A549 (cell line): ENCODE measurements at regions of chr11 and their contacts with region 1.

Region 1: GRCh38 chr11:75204685-75205563 is 35.6 kb upstream of the TPBGL start:
- DNase-seq: peak; percentile 75 to 84
- ATAC-seq: peak; percentile 85 to 99
- H3K4me3 ChIP-seq: no peak overlapping the region
- H3K27ac ChIP-seq: no peak overlapping the region
- H3K4me1 ChIP-seq: no peaks in the 10 kb centered on the region
- CTCF ChIP-seq: peak; percentile 85
- EP300 ChIP-seq: no peak
- POLR2A ChIP-seq: no peak
- RAD21 ChIP-seq: peak; percentile 90 to 91

Region 2: GRCh38 chr11:75014129-75014528 is 190.8 kb before region 1 on chr11:
- CTCF ChIA-PET with region 1: interaction called, 177 read pairs
- POLR2A ChIA-PET with region 1: no interaction called
- DNase-seq: peak in 1 of 2 experiments; percentile 18
- ATAC-seq: peak; percentile 41 to 63; a peak in 2 of 6 replicates
- H3K4me3 ChIP-seq: no peak overlapping the region
- H3K27ac ChIP-seq: no peak overlapping the region
- H3K4me1 ChIP-seq: peaks cover 3% of the 10 kb centered on the region; the same call in 1 of the 3 replicates
- CTCF ChIP-seq: no peak
- EP300 ChIP-seq: no peak
- POLR2A ChIP-seq: no peak
- RAD21 ChIP-seq: no peak

Region 3: GRCh38 chr11:75031771-75032549 is 173.0 kb before region 1 on chr11:
- CTCF ChIA-PET with region 1: interaction called, 177 read pairs
- POLR2A ChIA-PET with region 1: no interaction called
- DNase-seq: peak; percentile 71
- ATAC-seq: peak; percentile 85 to 95
- H3K4me3 ChIP-seq: no peak overlapping the region
- H3K27ac ChIP-seq: peak overlapping the region in 1 of 2 experiments; percentile 63; a peak in 3 of 6 replicates
- H3K4me1 ChIP-seq: peaks cover 9% of the 10 kb centered on the region; the same call in 1 of the 3 replicates
- CTCF ChIP-seq: peak; percentile 67
- EP300 ChIP-seq: no peak
- POLR2A ChIP-seq: no peak
- RAD21 ChIP-seq: peak; percentile 53 to 66

Region 4: GRCh38 chr11:75063732-75064314 is 141.1 kb before region 1 on chr11:
- CTCF ChIA-PET with region 1: no interaction called
- POLR2A ChIA-PET with region 1: no interaction called
- DNase-seq: no peak
- ATAC-seq: no peak
- H3K4me3 ChIP-seq: no peak overlapping the region
- H3K27ac ChIP-seq: no peak overlapping the region
- H3K4me1 ChIP-seq: no peaks in the 10 kb centered on the region
- CTCF ChIP-seq: no peak
- EP300 ChIP-seq: no peak
- POLR2A ChIP-seq: no peak
- RAD21 ChIP-seq: no peak

Region 5: DNA sequence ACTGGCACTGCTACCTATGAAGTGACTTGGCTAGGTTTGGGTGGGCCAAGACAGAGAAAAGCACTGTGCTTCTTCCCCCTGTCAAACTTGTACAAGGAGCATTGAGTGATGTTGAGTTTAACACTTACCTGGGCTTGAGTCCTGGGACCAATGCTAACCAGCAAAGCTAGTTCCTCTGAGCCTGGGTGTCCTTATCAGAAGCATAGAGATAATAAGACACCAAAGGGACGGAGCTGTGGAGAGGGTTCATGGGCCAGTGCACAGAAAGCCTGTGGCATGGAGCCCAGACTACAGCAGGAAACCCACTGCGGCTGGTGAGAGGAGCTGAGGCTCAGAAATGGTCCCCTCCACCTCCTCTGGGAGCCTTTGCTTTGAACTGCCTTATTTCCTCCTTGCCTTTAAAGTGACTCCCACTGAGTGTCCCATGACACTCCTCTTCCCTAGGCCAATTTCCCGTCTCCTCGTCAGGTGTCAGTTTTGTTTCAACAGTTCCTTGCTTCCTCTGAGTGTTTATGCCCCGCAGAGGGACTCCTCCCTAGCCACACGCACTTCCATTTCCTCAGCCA is 44.6 kb before region 1 on chr11:
- CTCF ChIA-PET with region 1: interaction called, 10 read pairs
- POLR2A ChIA-PET with region 1: no interaction called
- DNase-seq: no peak
- ATAC-seq: no peak
- H3K4me3 ChIP-seq: no peak overlapping the region
- H3K27ac ChIP-seq: peak overlapping the region; percentile 1 to 31; a peak in 1 of 6 replicates
- H3K4me1 ChIP-seq: peaks cover 24% of the 10 kb centered on the region
- CTCF ChIP-seq: no peak
- EP300 ChIP-seq: no peak
- POLR2A ChIP-seq: no peak
- RAD21 ChIP-seq: no peak

Region 6: GRCh38 chr11:75182669-75183068 is 22.3 kb before region 1 on chr11:
- CTCF ChIA-PET with region 1: interaction called, 12 read pairs
- POLR2A ChIA-PET with region 1: no interaction called
- DNase-seq: no peak
- ATAC-seq: no peak
- H3K4me3 ChIP-seq: no peak overlapping the region
- H3K27ac ChIP-seq: no peak overlapping the region
- H3K4me1 ChIP-seq: no peaks in the 10 kb centered on the region
- CTCF ChIP-seq: no peak
- EP300 ChIP-seq: no peak
- POLR2A ChIP-seq: no peak
- RAD21 ChIP-seq: no peak

Region 7: DNA sequence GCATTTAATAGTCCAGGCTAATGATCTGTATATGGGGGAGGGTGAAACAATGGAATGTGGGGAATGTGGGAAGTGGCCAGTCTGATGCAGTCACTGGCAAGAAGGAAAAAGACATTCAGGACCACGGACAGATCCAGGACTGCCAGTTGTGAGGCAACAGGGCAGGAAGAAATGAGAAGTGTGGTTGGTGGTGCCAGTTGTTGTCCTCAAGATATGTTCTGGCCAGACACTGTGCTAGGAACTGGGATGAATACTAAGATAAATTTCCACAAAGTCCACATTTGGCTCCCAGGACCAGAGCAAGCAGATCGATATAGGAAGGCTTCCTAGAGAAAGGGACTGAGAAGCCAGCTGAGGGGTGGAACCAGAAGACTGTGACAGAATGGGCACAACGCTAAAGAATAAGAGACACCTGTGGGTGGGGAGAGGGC is 28.8 kb after region 1 on chr11:
- CTCF ChIA-PET with region 1: interaction called, 11 read pairs
- POLR2A ChIA-PET with region 1: no interaction called
- DNase-seq: peak in 1 of 2 experiments; percentile 46
- ATAC-seq: peak; percentile 30 to 46; a peak in 1 of 6 replicates
- H3K4me3 ChIP-seq: no peak overlapping the region
- H3K27ac ChIP-seq: no peak overlapping the region
- H3K4me1 ChIP-seq: no peaks in the 10 kb centered on the region
- CTCF ChIP-seq: no peak
- EP300 ChIP-seq: no peak
- POLR2A ChIP-seq: no peak
- RAD21 ChIP-seq: no peak